ENCODE measurements at regions of chr11 and their contacts with region 1.

Region 1: GRCh38 chr11:123020968-123021367 is 39.3 kb upstream of the BSX start:
- DNase-seq: peak; percentile 49
- ATAC-seq: peak; percentile 90
- H3K4me3 ChIP-seq: no peak overlapping the region
- H3K27ac ChIP-seq: no peak overlapping the region
- H3K4me1 ChIP-seq: no peaks in the 10 kb centered on the region
- H3K27me3 ChIP-seq: peaks cover 35% of the 10 kb centered on the region
- CTCF ChIP-seq: peak; percentile 70
- POLR2A ChIP-seq: no peak
- RAD21 ChIP-seq: peak; percentile 63

Region 2: DNA sequence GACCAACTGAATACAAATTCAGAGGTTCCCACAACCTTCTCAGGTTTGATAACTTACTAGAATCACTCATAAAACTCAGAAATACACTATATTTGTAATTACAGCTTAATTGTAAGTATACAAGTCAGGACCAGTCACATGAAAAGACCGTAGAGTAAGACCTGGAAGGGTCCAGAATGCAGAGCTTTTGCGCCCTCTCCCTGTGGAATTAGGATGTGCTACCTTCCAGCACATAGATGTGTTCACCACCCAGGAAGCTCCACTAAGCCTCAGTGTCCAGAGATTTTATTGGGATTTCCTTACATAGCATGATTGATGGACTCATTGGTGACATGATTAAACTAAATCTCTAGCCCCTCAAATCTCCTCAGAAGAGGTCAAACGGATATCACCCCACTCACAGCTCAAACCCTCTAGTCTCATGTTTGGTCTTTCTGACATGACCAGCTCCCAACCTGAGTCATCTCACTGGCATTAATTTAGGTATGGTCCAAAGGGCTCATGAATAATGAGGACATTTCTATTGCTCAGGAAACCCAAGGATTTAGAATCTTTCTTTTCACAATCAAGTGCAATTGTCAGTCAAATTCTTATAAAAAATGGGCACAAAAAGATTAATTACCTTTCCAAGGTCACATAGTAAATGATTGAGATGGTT is 442.7 kb before region 1 on chr11:
- CTCF ChIA-PET with region 1: no interaction called
- POLR2A ChIA-PET with region 1: no interaction called
- dilution Hi-C with region 1: no loop called
- in situ Hi-C with region 1: no loop called
- intact Hi-C with region 1: loop called (anchors 1 kb)
- DNase-seq: no peak
- ATAC-seq: no peak
- H3K4me3 ChIP-seq: no peak overlapping the region
- H3K27ac ChIP-seq: no peak overlapping the region
- H3K4me1 ChIP-seq: peaks cover 2% of the 10 kb centered on the region; the same call in 1 of the 2 replicates
- H3K27me3 ChIP-seq: no peaks in the 10 kb centered on the region; the same call in 1 of the 2 replicates
- CTCF ChIP-seq: peak; percentile 5; the same call in 1 of the 2 replicates
- POLR2A ChIP-seq: no peak
- RAD21 ChIP-seq: no peak

Region 3: DNA sequence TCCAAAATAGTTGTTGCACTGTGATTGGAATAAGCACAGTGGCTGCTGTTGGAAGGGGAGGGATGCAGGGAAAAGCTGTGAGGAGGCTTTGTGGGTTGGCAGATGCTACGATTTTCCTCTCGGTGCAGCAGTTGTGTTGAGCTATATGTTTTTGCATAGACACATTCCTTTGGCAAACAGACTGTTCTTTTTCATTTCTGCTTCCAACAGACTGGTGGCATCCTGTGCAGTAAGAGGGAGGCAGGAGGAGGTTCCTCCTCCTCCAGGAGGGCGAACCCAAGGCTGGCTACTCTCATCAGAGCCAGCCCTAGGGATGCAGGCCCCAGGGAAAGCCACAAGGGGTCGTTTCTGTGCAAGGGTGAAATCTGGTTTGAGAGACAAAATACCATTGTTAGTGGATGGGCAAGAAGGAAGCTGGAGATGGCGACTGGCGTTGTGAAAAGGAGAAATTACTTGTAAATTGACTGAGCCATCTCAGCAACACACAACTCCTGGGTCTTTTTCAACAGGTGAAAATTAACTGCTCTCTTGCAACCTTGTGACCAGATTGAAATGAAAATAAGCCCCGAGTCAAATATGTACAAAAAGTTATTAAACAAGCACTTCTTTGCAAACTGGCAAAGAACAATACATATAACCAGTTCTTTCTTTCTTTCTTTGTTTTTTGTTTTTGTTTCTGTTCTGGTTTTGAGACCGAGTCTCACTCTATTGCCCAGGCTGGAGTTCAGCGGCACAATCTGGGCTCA is 392.0 kb before region 1 on chr11:
- CTCF ChIA-PET with region 1: interaction called, 5 read pairs
- POLR2A ChIA-PET with region 1: no interaction called
- dilution Hi-C with region 1: no loop called
- in situ Hi-C with region 1: loop called (anchors 10 kb)
- intact Hi-C with region 1: loop called (anchors 2 kb)
- DNase-seq: peak; percentile 77
- ATAC-seq: peak; percentile 95
- H3K4me3 ChIP-seq: no peak overlapping the region
- H3K27ac ChIP-seq: no peak overlapping the region
- H3K4me1 ChIP-seq: peaks cover 6% of the 10 kb centered on the region
- H3K27me3 ChIP-seq: peaks cover 9% of the 10 kb centered on the region
- CTCF ChIP-seq: peak; percentile 93
- POLR2A ChIP-seq: no peak
- RAD21 ChIP-seq: peak; percentile 88

Region 4: DNA sequence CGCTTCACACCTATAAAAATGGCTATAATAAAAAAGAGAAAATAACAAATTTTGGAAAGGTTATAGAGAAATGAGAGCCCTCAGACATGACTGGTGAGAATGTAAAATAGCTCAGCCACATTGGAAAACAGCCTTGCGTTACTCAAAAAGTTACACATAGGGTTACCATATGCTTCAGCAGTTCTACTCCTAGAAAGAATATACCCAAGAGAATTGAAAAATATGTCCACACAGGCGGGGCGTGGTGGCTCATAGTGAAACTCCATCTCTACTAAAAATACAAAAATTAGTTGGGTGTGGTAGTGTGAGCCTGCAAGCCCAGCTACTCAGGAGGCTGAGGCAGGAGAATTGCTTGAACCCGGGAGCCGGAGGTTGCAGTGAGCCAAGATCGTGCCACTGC is 146.0 kb before region 1 on chr11:
- CTCF ChIA-PET with region 1: interaction called, 4 read pairs
- POLR2A ChIA-PET with region 1: no interaction called
- dilution Hi-C with region 1: loop called (anchors 25 kb)
- in situ Hi-C with region 1: loop called (anchors 5 kb)
- intact Hi-C with region 1: no loop called
- DNase-seq: no peak
- ATAC-seq: no peak
- H3K4me3 ChIP-seq: no peak overlapping the region
- H3K27ac ChIP-seq: no peak overlapping the region
- H3K4me1 ChIP-seq: no peaks in the 10 kb centered on the region
- H3K27me3 ChIP-seq: peaks cover 22% of the 10 kb centered on the region
- CTCF ChIP-seq: no peak
- POLR2A ChIP-seq: no peak
- RAD21 ChIP-seq: no peak

Region 5: GRCh38 chr11:123478352-123478987 is 457.5 kb after region 1 on chr11:
- CTCF ChIA-PET with region 1: no interaction called
- POLR2A ChIA-PET with region 1: no interaction called
- dilution Hi-C with region 1: no loop called
- in situ Hi-C with region 1: no loop called
- intact Hi-C with region 1: loop called (anchors 10 kb)
- DNase-seq: peak; percentile 85
- ATAC-seq: peak; percentile 78
- H3K4me3 ChIP-seq: no peak overlapping the region
- H3K27ac ChIP-seq: no peak overlapping the region
- H3K4me1 ChIP-seq: peaks cover 16% of the 10 kb centered on the region
- H3K27me3 ChIP-seq: no peaks in the 10 kb centered on the region
- CTCF ChIP-seq: peak; percentile 92
- POLR2A ChIP-seq: no peak
- RAD21 ChIP-seq: peak; percentile 93

Measured in IMR-90 (cell line).